ENCODE measurements at regions of chr4 and their contacts with region 1.

Region 1: GRCh38 chr4:163554870-163555465 is 60.5 kb downstream of the TMA16 start:
- DNase-seq: peak; percentile 30
- H3K4me3 Mint-ChIP-seq: no peak overlapping the region
- H3K27ac Mint-ChIP-seq: no peak overlapping the region
- H3K4me1 Mint-ChIP-seq: peaks cover 4% of the 10 kb centered on the region
- H3K27me3 Mint-ChIP-seq: no peaks in the 10 kb centered on the region
- CTCF ChIP-seq: peak; percentile 63

Region 2: DNA sequence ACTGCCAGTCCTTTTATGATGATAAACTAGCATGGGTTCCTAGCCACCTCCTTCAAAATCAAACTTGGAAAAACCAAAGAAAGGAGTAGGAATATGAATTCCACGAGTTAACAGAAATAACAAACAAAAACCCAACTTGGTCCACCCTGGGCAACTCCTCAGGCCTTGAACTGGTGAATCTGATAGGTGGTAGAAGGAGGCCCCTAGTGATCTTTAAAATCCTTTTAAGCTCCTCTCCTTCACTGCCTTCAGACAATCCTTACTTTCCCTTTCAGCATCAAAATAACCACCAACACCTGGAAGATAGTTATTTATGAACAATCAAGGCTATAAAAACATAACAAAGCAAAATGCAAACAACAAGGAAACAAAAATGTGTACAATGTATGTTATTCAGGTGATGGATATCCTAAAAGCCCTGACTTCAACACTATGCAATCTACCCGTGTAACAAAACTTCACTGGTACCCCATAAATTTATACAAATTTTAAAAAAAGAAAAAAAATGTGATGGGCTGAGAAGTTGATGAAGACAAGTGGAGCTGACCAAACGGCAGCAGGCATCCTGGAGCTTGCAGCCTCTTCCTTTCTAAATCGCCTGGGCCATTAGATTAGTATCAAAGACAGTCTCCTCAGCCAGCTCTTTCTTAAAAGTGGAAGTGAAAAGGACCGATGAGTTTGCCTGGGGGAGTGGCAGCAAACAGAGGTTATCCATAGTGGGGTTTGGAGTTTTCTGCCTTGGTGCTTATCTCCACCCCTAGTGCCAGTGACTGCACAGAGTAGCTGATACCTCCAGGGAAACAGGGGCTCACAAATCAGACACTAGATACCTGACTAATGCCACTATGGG is 119.1 kb after region 1 on chr4:
- CTCF ChIA-PET with region 1: interaction called, 17 read pairs
- POLR2A ChIA-PET with region 1: no interaction called
- intact Hi-C with region 1: loop called (anchors 2 kb)
- DNase-seq: no peak
- H3K4me3 Mint-ChIP-seq: no peak overlapping the region
- H3K27ac Mint-ChIP-seq: no peak overlapping the region
- H3K4me1 Mint-ChIP-seq: no peaks in the 10 kb centered on the region
- H3K27me3 Mint-ChIP-seq: no peaks in the 10 kb centered on the region
- CTCF ChIP-seq: no peak

Region 3: GRCh38 chr4:163755013-163755412 is 200.0 kb after region 1 on chr4:
- CTCF ChIA-PET with region 1: interaction called, 24 read pairs
- POLR2A ChIA-PET with region 1: no interaction called
- intact Hi-C with region 1: loop called (anchors 1 kb)
- DNase-seq: peak; percentile 49
- H3K4me3 Mint-ChIP-seq: no peak overlapping the region
- H3K27ac Mint-ChIP-seq: no peak overlapping the region
- H3K4me1 Mint-ChIP-seq: no peaks in the 10 kb centered on the region
- H3K27me3 Mint-ChIP-seq: no peaks in the 10 kb centered on the region
- CTCF ChIP-seq: peak; percentile 38

Region 4: GRCh38 chr4:164383358-164384220 is 828.6 kb after region 1 on chr4:
- CTCF ChIA-PET with region 1: no interaction called
- POLR2A ChIA-PET with region 1: no interaction called
- intact Hi-C with region 1: loop called (anchors 5 kb)
- DNase-seq: peak; percentile 40
- H3K4me3 Mint-ChIP-seq: peak overlapping the region; percentile 85
- H3K27ac Mint-ChIP-seq: peak overlapping the region; percentile 39
- H3K4me1 Mint-ChIP-seq: no peaks in the 10 kb centered on the region
- H3K27me3 Mint-ChIP-seq: no peaks in the 10 kb centered on the region
- CTCF ChIP-seq: peak; percentile 15

Region 5: GRCh38 chr4:164748375-164748774 is 1193.4 kb after region 1 on chr4:
- CTCF ChIA-PET with region 1: interaction called, 33 read pairs
- POLR2A ChIA-PET with region 1: interaction called, 3 read pairs
- intact Hi-C with region 1: loop called (anchors 1 kb)
- DNase-seq: peak; percentile 39
- H3K4me3 Mint-ChIP-seq: no peak overlapping the region
- H3K27ac Mint-ChIP-seq: no peak overlapping the region
- H3K4me1 Mint-ChIP-seq: peaks cover 6% of the 10 kb centered on the region
- H3K27me3 Mint-ChIP-seq: no peaks in the 10 kb centered on the region
- CTCF ChIP-seq: peak; percentile 41